ENCODE measurements at regions of chr4 and their contacts with region 1.

Region 1: DNA sequence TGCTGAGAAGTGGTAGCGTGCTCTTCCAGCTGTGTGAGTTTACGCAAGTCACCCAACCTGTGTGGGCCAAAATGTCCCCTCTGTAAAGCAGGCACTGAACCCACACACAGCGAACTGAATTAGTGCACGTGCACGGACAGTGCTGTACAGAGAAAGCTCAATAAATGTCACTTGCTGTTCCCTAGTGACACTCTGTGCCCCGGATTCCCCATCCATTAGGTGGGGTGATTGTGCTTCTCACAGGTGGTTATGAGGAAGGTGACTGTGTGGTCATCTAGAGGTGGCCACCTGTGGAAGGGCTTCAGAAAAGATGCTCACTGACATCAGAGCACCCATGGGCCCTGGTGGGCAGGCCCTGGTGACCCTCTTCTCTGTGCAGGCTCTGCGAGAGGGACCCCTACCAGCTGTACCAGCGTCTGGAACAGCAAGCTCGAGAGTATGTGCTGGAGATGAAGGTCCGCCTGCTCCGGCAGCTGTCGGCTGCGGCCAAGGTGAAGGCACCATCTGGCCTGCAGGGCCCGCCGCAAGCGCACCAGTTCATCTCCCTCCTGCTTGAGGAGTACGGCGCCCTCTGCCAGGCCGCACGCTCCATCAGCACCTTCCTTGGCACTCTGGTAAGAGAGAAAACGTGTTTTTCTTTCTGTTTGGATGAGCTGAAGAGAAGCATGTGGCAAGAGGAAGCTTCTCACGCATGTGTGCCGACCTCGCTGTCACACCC is 94.3 kb downstream of the FAM193A start:
- DNase-seq: no peak
- H3K4me3 ChIP-seq: no peak overlapping the region
- H3K27ac ChIP-seq: no peak overlapping the region
- H3K4me1 ChIP-seq: no peaks in the 10 kb centered on the region
- H3K27me3 ChIP-seq: no peaks in the 10 kb centered on the region
- CTCF ChIP-seq: no peak

Region 2: GRCh38 chr4:2484993-2485392 is 145.7 kb before region 1 on chr4:
- CTCF ChIA-PET with region 1: no interaction called
- dilution Hi-C with region 1: loop called (anchors 5 kb)
- in situ Hi-C with region 1: no loop called
- intact Hi-C with region 1: no loop called
- DNase-seq: no peak
- H3K4me3 ChIP-seq: no peak overlapping the region
- H3K27ac ChIP-seq: no peak overlapping the region
- H3K4me1 ChIP-seq: peaks cover 9% of the 10 kb centered on the region
- H3K27me3 ChIP-seq: no peaks in the 10 kb centered on the region
- CTCF ChIP-seq: no peak

Region 3: GRCh38 chr4:2497931-2498330 is 132.8 kb before region 1 on chr4:
- CTCF ChIA-PET with region 1: no interaction called
- dilution Hi-C with region 1: no loop called
- in situ Hi-C with region 1: no loop called
- intact Hi-C with region 1: no loop called
- DNase-seq: no peak
- H3K4me3 ChIP-seq: no peak overlapping the region
- H3K27ac ChIP-seq: no peak overlapping the region
- H3K4me1 ChIP-seq: no peaks in the 10 kb centered on the region
- H3K27me3 ChIP-seq: no peaks in the 10 kb centered on the region
- CTCF ChIP-seq: no peak

Region 4: DNA sequence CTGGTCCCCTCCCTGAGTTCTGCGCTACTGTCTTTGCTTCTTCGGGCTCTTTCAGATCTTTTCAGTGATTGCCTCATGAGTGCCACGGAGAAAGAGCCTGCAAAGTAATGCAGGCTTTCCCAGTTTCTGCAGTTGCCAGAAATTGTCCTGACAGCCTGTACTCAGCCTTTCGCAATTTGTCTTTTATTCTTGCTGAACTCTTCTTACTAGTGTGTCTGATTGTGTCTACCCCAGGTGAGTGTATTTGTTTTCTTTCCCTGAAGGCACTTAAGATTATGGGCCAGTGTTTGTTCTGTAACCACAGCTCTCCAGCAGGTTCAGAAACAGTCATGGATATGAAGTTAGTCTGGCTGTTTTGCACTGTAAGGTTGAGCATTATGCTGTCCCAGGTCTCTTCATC is 47.2 kb before region 1 on chr4:
- CTCF ChIA-PET with region 1: no interaction called
- dilution Hi-C with region 1: loop called (anchors 5 kb)
- in situ Hi-C with region 1: no loop called
- intact Hi-C with region 1: no loop called
- DNase-seq: peak; percentile 89
- H3K4me3 ChIP-seq: peak overlapping the region in 1 of 3 experiments; percentile 23
- H3K27ac ChIP-seq: no peak overlapping the region
- H3K4me1 ChIP-seq: peaks cover 17% of the 10 kb centered on the region
- H3K27me3 ChIP-seq: no peaks in the 10 kb centered on the region
- CTCF ChIP-seq: no peak

Region 5: DNA sequence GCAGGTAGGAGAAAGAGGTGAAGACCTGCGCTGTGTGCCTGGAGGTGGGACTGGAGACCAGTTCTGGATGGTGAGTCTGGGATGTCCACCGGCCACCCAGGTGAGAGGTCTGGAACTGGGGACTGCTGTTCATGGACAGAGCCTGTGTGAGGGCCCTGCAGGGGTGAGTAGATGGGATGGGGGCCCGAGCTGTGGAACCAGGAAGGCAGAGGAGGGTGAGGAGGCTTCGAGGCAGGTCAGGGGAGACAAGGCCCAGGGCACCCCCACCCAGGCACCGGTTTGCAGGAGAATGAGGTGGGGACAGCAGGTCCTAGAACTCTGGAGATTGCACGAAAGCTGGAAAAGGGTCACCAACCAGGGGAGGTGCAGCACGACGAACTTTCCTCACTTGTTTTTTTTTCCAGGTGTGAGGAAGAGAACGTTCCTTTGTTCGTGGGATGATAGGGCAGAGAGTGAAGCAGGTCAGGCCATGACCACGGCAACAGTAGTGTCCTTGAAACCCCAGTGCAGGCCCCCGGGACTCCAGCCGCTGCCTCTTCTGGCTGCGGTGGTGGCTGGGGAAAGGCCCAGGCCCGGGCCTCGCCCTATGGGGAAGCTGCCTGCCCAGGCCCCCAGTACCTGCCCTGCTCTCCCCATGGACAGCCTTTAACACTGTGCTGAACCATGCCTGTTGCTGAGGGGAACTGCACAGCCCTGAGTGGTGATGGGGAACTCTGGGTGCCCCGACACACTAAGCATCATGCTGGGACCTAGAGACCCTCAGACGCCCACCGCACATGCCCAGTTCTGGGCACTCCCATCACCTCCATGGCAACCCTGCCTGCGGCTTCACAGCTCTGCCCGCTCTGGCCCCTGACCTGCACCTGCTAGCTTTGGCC is 102.5 kb after region 1 on chr4:
- CTCF ChIA-PET with region 1: no interaction called
- dilution Hi-C with region 1: loop called (anchors 5 kb)
- in situ Hi-C with region 1: no loop called
- intact Hi-C with region 1: no loop called
- DNase-seq: no peak
- H3K4me3 ChIP-seq: no peak overlapping the region
- H3K27ac ChIP-seq: no peak overlapping the region
- H3K4me1 ChIP-seq: no peaks in the 10 kb centered on the region
- H3K27me3 ChIP-seq: no peaks in the 10 kb centered on the region
- CTCF ChIP-seq: no peak

Region 6: DNA sequence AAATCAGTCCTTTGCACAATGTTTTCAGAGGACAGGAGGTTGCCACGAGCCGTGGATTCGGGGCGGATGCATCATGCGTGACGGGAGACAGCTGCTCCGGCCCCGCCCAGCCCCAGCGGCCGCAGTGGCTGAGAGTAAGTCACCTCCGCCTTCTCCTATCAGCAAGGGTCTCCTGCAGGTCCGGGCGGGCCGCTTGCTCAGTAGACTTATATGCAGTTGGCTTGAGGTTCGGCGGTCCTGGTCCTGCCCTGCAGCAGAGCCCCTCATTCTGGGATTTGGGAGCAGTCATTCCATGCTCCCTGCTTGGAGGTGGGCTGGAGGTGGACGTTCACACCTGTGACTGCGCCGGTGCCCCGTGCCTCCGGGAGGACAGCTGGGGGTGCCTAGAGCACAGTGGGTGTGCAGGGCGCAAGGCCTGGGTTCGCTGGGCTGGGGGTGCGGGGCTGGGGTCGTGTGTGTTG is 1049.2 kb after region 1 on chr4:
- CTCF ChIA-PET with region 1: no interaction called
- dilution Hi-C with region 1: no loop called
- in situ Hi-C with region 1: no loop called
- intact Hi-C with region 1: no loop called
- DNase-seq: no peak
- H3K4me3 ChIP-seq: no peak overlapping the region
- H3K27ac ChIP-seq: no peak overlapping the region
- H3K4me1 ChIP-seq: no peaks in the 10 kb centered on the region
- H3K27me3 ChIP-seq: no peaks in the 10 kb centered on the region
- CTCF ChIP-seq: no peak

Measured in mammary epithelial cell (primary cell).